ENCODE measurements at regions of chr2 and their contacts with region 1.

Region 1: DNA sequence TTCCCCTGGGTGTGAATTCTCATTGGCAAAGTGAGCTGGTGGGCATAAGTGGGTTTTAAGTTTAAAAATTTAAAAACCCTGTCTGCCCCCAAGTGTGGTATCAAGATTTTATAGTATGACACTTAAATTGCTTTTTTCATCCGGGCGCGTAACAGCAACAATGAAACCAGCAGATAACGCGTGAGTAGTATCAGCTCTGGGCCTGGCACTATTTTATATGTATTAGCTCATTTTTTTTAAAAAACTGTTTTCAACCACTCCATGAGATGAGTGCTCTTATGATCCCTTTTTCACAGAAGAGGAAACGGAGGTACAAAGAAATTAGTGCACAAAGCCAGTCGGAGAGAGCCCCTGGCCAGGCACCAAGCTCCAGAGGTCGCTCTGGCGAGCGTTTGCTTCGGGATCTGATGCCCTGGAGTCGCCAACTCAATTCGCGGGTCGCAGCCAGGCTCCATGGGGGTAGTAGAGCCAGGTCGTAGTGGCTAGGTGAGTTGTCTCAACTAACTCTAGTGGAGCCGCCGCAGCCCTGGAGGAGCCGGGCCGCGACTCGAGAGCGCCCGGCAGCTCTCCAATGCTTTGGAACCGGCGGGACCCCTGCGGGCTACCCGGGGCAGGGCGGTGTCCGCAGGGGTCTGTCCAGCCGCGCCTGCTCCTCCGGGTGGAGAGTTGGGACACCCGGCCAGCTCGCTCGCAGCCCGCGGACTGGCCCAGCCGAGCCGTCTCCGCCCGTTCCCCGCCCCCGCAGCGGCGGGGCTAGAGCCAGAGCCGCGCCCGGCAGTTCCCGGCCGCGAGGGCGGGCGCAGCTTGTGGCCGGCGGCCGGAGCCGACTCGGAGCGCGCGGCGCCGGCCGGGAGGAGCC is at the start of gene IL1R1:
- DNase-seq: no peak
- H3K4me3 ChIP-seq: peak within 1 kb of the TSS; percentile 65 to 81
- H3K27ac ChIP-seq: peak within 1 kb of the TSS; percentile 94
- H3K4me1 ChIP-seq: peaks cover 47% of the 10 kb centered on the region
- H3K27me3 ChIP-seq: no peaks in the 10 kb centered on the region
- CTCF ChIP-seq: no peak
- POLR2A ChIP-seq: peak in 1 of 2 donors; percentile 85
- total RNA-seq, gene IL1R1: 79.6 TPM

Region 2: DNA sequence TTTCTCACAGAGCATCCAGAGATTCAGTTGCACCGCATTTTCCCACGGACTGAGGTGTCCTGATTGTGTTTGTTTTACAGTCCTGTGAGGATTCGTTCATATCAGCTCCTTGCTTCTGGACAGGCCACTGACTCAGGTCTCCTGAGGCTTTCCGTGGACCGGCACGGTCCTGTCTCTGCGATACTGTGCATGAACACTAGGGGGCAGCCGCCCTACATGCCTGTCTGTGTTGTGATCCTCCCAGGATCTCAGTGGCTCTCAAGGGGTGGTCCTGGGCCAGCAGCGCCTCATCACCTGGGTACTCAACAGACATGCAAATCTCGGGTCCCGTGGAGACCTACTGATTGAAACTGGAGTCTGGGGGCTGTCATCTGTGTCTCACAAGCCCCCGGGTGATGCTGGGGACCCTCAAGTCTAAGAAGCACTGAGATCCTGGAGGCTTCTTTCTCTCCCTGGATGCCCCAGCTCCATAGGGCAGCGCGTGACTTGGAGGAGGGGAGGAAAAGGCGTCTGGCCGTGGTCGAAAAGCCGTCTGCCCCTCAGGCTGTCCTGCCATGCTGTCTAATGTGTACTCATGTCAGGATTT is 121.5 kb before region 1 on chr2:
- intact Hi-C with region 1: loop called (anchors 5 kb)
- DNase-seq: no peak
- H3K4me3 ChIP-seq: no peak overlapping the region
- H3K27ac ChIP-seq: peak overlapping the region; percentile 64
- H3K4me1 ChIP-seq: peaks cover 19% of the 10 kb centered on the region
- H3K27me3 ChIP-seq: no peaks in the 10 kb centered on the region
- CTCF ChIP-seq: peak; percentile 93 to 97 (median 97)
- POLR2A ChIP-seq: no peak

Region 3: DNA sequence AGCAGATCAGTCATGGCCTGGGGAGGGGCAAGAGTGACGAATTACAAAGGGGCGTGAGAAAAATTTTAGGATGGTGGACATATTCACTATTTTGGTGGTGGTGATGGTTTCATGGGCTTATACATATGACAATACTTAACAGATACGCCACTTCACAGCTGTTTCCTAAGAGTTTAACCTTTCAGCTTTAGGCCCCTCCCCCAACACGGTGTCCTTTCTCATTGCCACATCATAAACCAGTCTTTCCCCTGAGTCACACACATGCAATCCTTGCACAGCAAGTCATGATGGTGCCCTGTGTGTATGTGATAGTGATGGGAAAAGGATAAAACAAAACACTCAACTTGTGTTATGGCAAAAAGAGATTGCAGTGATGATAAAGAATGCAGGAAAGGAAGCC is 47.3 kb before region 1 on chr2:
- intact Hi-C with region 1: no loop called
- DNase-seq: no peak
- H3K4me3 ChIP-seq: no peak overlapping the region
- H3K27ac ChIP-seq: no peak overlapping the region
- H3K4me1 ChIP-seq: peaks cover 9% of the 10 kb centered on the region
- H3K27me3 ChIP-seq: no peaks in the 10 kb centered on the region
- CTCF ChIP-seq: no peak
- POLR2A ChIP-seq: no peak

Measured in vagina (tissue), 2 donors.